Transverse colon (tissue), 4 donors: ENCODE measurements at regions of chr13 and their contacts with region 1.

Region 1: DNA sequence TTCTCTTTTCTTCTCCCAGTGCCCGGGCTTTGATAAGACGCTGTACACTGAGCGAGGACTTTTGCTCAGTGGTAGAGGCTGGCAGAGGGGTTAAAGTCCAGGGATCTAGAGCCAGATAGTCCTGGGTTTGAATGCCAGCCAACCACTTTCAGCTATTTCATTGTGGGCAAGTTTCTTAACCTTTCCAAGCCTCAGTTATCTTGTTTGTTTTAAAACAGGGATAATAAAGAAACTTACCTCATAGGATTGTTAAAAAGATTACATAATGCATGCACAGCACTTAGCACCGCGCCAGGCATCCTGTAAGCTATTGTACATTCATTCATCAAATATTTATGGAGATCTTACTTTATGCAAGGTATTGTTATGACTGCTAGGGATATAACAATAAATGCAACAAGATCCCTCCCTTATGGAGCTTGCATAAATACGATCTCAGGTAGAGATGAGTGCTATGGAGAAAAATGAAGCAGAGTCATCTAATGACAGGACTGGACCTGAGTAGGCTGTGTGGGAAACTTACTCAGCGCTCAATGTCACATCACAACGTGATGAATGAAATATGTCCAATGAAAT is 70.8 kb downstream of the LNX2 start:
- DNase-seq: peak; percentile 82
- H3K4me3 ChIP-seq: no peak overlapping the region
- H3K27ac ChIP-seq: peak overlapping the region; percentile 32 to 60 (median 49)
- H3K4me1 ChIP-seq: peaks cover 0 to 24% (median 8%) of the 10 kb centered on the region in 4 donors
- H3K27me3 ChIP-seq: no peaks in the 10 kb centered on the region
- CTCF ChIP-seq: no peak
- EP300 ChIP-seq: no peak
- POLR2A ChIP-seq: no peak

Region 2: GRCh38 chr13:26168237-26168820 is 1381.2 kb before region 1 on chr13:
- in situ Hi-C with region 1: no loop called
- intact Hi-C with region 1: no loop called
- DNase-seq: no peak
- H3K4me3 ChIP-seq: no peak overlapping the region
- H3K27ac ChIP-seq: no peak overlapping the region
- H3K4me1 ChIP-seq: no peaks in the 10 kb centered on the region
- H3K27me3 ChIP-seq: no peaks in the 10 kb centered on the region
- CTCF ChIP-seq: no peak
- EP300 ChIP-seq: no peak
- POLR2A ChIP-seq: no peak

Region 3: GRCh38 chr13:27504128-27504867 is 45.2 kb before region 1 on chr13:
- in situ Hi-C with region 1: no loop called
- intact Hi-C with region 1: loop called (anchors 2 kb)
- DNase-seq: no peak
- H3K4me3 ChIP-seq: no peak overlapping the region
- H3K27ac ChIP-seq: no peak overlapping the region
- H3K4me1 ChIP-seq: no peaks in the 10 kb centered on the region
- H3K27me3 ChIP-seq: no peaks in the 10 kb centered on the region
- CTCF ChIP-seq: no peak
- EP300 ChIP-seq: no peak
- POLR2A ChIP-seq: no peak